ENCODE measurements at regions of chr9 and their contacts with region 1.

Region 1: DNA sequence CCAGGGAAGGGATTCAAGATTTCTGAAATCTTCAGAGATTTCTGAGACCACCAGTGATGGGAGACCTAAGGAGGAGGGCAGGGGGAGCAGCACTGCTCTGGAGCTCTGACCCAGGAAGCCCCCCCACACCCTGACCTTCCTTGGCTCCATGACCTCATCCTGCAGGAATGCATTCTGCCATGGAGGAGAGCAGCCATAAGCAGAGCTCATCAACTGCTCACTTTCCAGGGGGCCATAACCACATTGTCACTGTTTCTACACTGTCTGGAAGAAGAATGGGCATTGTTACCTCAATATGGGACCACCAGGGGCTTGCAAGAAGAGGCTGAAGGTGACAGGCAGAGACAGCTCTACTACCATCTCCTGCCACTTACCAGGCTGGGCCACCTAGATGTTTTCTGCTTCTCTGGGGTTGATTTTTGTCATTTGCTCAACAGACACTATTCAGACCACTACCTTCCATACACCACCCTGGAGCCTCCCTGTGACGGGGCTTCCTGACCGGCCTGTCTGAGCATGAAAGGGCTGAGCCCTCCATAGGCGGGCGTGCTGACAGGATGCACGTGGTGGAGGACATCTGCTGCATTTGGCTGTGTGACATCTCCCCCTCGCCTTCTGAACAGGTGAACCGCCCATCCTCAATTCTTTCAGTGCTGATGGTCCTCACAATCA is 2.3 kb upstream of the TSC1 start:
- DNase-seq: no peak
- ATAC-seq: no peak
- H3K4me3 Mint-ChIP-seq: no peak overlapping the region
- H3K27ac Mint-ChIP-seq: no peak overlapping the region
- H3K4me1 Mint-ChIP-seq: peaks cover 22% of the 10 kb centered on the region
- H3K27me3 Mint-ChIP-seq: no peaks in the 10 kb centered on the region

Region 2: GRCh38 chr9:132877824-132878694 is 68.7 kb before region 1 on chr9 and contains the start of gene AK8:
- CTCF ChIA-PET with region 1: no interaction called
- DNase-seq: peak; percentile 78
- ATAC-seq: peak; percentile 84
- H3K4me3 Mint-ChIP-seq: peak within 1 kb of the TSS; percentile 70
- H3K27ac Mint-ChIP-seq: peak within 1 kb of the TSS; percentile 70
- H3K4me1 Mint-ChIP-seq: peaks cover 41% of the 10 kb centered on the region
- H3K27me3 Mint-ChIP-seq: peaks cover 28% of the 10 kb centered on the region
- total RNA-seq, gene AK8: 0.63 TPM in 1 of 2 experiments, not detected in the other

Region 3: GRCh38 chr9:132973713-132974112 is 27.0 kb after region 1 on chr9:
- CTCF ChIA-PET with region 1: interaction called, 15 read pairs
- DNase-seq: no peak
- ATAC-seq: no peak
- H3K4me3 Mint-ChIP-seq: no peak overlapping the region
- H3K27ac Mint-ChIP-seq: no peak overlapping the region
- H3K4me1 Mint-ChIP-seq: peaks cover 6% of the 10 kb centered on the region
- H3K27me3 Mint-ChIP-seq: peaks cover 32% of the 10 kb centered on the region